ENCODE measurements at regions of chr1 and their contacts with region 1.

Region 1: DNA sequence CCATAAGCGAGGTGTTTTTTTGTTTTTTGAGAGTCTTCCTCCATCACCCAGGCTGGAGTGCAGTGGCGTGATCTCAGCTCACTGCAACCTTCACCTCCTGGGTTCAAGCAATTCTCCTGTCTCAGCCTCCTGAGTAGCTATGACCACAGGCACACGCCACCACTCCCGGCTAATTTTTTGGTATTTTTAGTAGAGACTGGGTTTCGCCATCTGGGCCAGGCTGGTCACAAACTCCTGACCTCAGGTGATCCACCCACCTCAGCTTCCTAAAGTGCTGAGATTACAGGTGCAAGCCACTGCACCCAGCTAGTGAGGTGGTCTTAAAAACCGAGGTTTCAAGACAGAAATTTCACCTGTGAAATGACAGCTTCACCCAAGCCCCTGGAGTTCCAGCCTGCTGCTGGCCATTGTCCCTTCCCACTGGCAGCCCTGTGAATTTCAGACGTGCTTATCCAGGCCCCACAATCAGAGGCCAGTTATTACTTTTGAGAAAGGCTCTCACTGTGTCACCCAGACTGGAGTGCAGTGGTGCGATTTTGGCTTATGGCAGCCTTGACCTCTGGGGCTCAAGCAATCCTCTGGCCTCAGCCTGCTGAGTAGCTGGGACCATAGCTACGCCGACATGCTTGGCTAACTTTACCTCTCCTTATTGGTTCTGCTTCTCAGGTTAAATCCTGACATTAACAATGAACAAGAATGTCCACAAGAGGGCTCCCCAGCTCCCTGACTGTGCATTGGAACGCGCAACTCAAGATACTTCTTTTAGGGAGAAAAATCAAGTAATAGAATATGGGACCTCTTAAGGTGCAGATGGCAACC is 19.4 kb downstream of the ENO1 start:
- DNase-seq: peak; percentile 31 to 48
- H3K4me3 ChIP-seq: no peak overlapping the region
- H3K27ac ChIP-seq: 0 out of 2 replicates have a peak overlapping the region, but pooled peaks have one; percentile 2
- H3K4me1 ChIP-seq: 0 out of 2 replicates have a peak, but pooled peaks cover 5% of the 10 kb centered on the region
- H3K27me3 ChIP-seq: no peaks in the 10 kb centered on the region
- CTCF ChIP-seq: peak; percentile 69

Region 2: DNA sequence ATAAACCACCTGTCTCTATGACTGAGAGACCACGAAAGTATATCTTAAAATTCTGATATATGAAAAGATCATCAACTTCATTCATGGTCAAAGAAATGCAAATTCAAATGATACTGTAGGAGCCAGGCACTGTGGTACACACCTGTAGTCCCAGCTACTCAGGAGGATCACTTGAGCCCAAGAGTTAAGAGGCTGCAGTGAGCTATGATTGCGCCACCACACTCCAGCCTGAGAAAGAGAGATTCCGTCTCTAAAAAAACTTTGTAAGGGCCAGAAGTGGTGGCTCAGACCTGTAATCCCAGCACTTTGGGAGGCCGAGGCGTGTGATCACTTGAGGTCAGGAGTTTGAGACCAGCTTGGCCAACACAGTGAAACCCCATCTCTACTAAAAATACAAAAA is 58.7 kb before region 1 on chr1:
- CTCF ChIA-PET with region 1: no interaction called
- POLR2A ChIA-PET with region 1: interaction called, 10 read pairs
- intact Hi-C with region 1: no loop called
- DNase-seq: no peak
- H3K4me3 ChIP-seq: no peak overlapping the region
- H3K27ac ChIP-seq: no peak overlapping the region
- H3K4me1 ChIP-seq: no peaks in the 10 kb centered on the region; the same call in 1 of the 2 replicates
- H3K27me3 ChIP-seq: no peaks in the 10 kb centered on the region
- CTCF ChIP-seq: no peak

Region 3: DNA sequence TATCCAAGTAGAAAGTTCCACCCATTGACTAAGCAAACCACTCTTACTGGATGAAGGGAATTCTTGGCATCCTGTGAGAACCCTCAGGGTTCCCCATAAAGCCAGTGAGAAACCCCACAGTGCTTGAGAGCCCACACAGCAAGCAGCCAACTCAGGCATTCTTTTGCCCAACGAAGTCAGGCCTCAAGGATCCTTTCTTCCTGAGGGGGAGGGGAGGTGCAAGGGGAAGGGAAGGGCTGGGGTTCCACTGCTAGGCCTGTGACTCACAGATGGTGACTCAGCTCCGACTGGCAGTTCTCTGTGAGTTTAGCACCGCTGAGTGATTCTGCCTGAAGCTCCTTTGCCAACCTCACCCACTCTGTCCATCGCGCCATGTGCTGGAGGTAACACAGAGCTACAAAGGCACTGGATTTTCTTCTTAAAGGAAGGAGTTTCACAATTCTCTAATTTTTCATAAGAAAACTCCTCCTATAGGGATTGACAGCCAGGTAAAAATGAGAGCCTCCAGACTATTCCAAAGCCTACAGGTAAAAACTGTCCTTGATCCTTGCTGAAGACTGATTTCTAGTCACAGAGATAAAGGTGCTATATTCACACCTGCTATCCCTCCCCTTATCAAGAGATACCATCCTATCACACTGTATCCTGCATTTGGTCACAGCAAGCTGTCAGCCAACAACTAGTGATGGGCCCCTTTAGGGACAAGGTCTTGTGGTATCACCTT is 14.6 kb after region 1 on chr1:
- CTCF ChIA-PET with region 1: no interaction called
- POLR2A ChIA-PET with region 1: interaction called, 4 read pairs
- intact Hi-C with region 1: loop called (anchors 2 kb)
- DNase-seq: peak; percentile 91 to 95
- H3K4me3 ChIP-seq: peak overlapping the region; percentile 91; the same call in 1 of the 2 replicates
- H3K27ac ChIP-seq: peak overlapping the region; percentile 96
- H3K4me1 ChIP-seq: peaks cover 46% of the 10 kb centered on the region
- H3K27me3 ChIP-seq: no peaks in the 10 kb centered on the region
- CTCF ChIP-seq: no peak

Region 4: DNA sequence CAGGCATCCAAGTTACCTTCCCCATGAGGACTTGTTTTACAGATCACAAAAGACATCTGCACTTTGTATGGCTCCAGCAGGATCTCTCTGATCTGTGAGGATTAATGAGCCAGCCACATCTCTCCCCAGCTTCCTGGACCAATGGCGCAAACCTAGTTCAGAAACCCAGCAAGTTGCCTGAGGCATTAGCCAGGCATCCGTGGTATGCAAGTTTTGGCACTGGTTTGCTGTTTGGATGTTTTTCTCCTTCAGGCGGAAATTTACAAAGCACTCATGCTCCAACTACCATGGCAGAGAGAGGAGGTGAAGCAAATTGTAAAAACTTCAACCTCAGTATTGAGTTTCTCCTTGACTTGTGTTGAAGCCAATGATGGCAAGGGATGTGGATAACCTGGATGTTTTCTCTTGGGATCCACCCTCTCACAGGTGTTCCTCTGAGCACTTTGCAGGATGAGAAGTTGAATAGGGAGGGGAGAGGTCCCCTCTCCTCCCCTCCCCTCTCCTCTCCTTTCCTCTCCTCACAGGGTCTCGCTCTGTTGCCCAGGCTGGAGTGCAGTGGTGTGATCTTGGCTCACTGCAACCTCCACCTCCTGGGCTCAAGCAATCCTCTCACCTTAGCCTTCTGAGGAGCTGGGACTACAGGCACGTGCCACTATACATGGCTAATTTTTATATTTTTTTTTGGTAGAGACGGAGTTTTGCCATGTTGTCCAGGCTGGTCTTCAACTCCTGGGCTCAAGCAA is 45.0 kb after region 1 on chr1:
- CTCF ChIA-PET with region 1: no interaction called
- POLR2A ChIA-PET with region 1: no interaction called
- intact Hi-C with region 1: loop called (anchors 1 kb)
- DNase-seq: peak; percentile 91 to 92
- H3K4me3 ChIP-seq: no peak overlapping the region
- H3K27ac ChIP-seq: peak overlapping the region; percentile 89
- H3K4me1 ChIP-seq: peaks cover 33% of the 10 kb centered on the region
- H3K27me3 ChIP-seq: no peaks in the 10 kb centered on the region
- CTCF ChIP-seq: no peak

Region 5: GRCh38 chr1:9004700-9005394 is 145.8 kb after region 1 on chr1:
- CTCF ChIA-PET with region 1: interaction called, 3 read pairs
- POLR2A ChIA-PET with region 1: no interaction called
- intact Hi-C with region 1: loop called (anchors 5 kb)
- DNase-seq: peak; percentile 63 to 86
- H3K4me3 ChIP-seq: no peak overlapping the region
- H3K27ac ChIP-seq: no peak overlapping the region
- H3K4me1 ChIP-seq: no peaks in the 10 kb centered on the region
- H3K27me3 ChIP-seq: no peaks in the 10 kb centered on the region
- CTCF ChIP-seq: peak; percentile 90

Region 6: GRCh38 chr1:9101510-9102146 is 242.5 kb after region 1 on chr1:
- CTCF ChIA-PET with region 1: no interaction called
- POLR2A ChIA-PET with region 1: no interaction called
- intact Hi-C with region 1: loop called (anchors 10 kb)
- DNase-seq: peak in 1 of 2 experiments; percentile 38
- H3K4me3 ChIP-seq: no peak overlapping the region
- H3K27ac ChIP-seq: no peak overlapping the region
- H3K4me1 ChIP-seq: no peaks in the 10 kb centered on the region
- H3K27me3 ChIP-seq: no peaks in the 10 kb centered on the region
- CTCF ChIP-seq: peak; percentile 63

Region 7: DNA sequence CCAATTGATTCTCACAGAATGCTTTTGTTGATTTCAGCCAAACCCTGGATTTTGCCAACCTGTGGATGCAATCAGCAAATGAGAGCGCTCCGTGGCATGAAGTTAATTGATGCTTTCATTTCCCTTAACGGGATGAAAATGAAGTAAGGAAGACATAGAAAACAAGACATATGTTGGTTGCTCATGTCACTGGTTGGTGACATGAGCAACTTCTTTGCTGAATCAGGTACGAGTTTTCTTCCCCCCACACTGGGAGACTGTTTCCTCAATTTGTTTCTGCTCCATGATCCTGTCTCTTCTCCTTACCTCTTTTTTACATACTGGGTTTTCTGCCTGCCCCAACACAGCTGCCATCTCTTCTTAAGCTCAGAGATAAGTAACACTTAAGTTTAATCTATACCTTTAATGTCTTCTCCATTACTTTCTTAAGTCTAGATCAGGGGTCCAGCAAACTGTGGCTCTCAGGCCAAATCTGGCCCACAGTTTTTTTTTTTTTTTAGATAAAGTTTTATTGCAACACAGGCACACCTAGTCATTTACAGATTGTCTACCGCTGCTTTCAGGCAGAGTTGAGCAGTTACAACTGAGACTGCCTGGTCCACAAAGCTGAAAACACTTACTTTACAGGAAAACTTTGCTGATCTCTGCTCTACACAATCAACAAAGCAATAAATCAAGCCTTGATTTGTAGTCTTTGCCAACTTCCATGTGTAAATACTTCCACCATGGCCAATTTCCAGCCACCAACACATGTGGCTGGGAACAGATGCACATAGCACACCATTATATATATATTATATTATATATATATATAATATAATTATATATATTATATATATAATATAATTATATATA is 256.5 kb after region 1 on chr1:
- CTCF ChIA-PET with region 1: no interaction called
- POLR2A ChIA-PET with region 1: no interaction called
- intact Hi-C with region 1: no loop called
- DNase-seq: no peak
- H3K4me3 ChIP-seq: no peak overlapping the region
- H3K27ac ChIP-seq: no peak overlapping the region
- H3K4me1 ChIP-seq: no peaks in the 10 kb centered on the region
- H3K27me3 ChIP-seq: no peaks in the 10 kb centered on the region
- CTCF ChIP-seq: no peak

Measured in PC-9 (cell line).